ENCODE measurements at regions of chr1 and their contacts with region 1.

Region 1: DNA sequence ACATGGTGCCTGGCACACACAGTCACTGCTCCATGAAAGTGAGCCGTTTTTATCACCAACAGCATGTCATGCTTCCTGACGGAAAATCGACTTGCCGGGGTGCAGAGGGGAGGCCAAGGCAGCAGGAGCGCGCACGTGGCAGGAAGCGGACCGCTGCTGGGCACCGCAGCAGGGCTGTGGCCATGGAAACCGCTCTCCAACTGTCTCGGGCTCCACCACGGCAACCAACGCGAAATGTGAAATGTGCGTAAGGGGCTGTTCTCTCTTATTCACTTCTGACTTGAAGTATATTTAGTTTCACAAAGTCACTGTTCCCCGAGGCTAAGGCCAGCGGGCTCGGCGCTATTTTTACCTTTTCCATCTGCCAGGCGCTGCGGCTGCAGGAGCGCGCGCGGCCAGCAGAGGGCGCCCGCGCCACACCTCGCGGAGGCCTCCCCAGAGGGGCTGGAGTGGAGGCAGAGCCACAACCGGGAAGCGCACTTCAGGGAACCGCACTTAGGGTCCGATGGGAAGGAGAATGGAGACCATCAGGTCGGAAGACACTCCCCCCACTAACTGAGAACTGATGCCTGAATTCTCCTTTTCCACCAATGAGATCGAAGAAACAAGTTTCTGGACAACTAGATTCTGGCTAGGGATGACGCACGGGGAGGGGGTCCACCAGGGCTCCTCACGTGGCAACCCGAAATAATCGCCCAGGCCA is 19.7 kb downstream of the RCC2 start:
- DNase-seq: peak; percentile 37 to 80 (median 64)
- ATAC-seq: peak; percentile 93
- H3K4me3 ChIP-seq: no peak overlapping the region
- H3K4me3 Mint-ChIP-seq: no peak overlapping the region
- H3K27ac ChIP-seq: no peak overlapping the region
- H3K27ac Mint-ChIP-seq: peak overlapping the region in 4 of 9 donors; percentile 42 to 76 (median 59)
- H3K4me1 ChIP-seq: no peaks in the 10 kb centered on the region
- H3K4me1 Mint-ChIP-seq: peaks cover 0 to 11% (median 6%) of the 10 kb centered on the region in 7 donors
- H3K27me3 ChIP-seq: no peaks in the 10 kb centered on the region
- H3K27me3 Mint-ChIP-seq: no peaks in the 10 kb centered on the region

Region 2: GRCh38 chr1:17045634-17046333 is 374.0 kb before region 1 on chr1:
- CTCF ChIA-PET with region 1: no interaction called
- POLR2A ChIA-PET with region 1: no interaction called
- intact Hi-C with region 1: no loop called
- DNase-seq: peak in 6 of 9 donors; percentile 21 to 47 (median 28)
- ATAC-seq: peak; percentile 50
- H3K4me3 ChIP-seq: no peak overlapping the region
- H3K4me3 Mint-ChIP-seq: peak overlapping the region in 2 of 10 donors; percentile 4 to 49
- H3K27ac ChIP-seq: no peak overlapping the region
- H3K27ac Mint-ChIP-seq: peak overlapping the region in 6 of 9 donors; percentile 45 to 79 (median 66)
- H3K4me1 ChIP-seq: peaks cover 0 to 3% of the 10 kb centered on the region in 2 donors
- H3K4me1 Mint-ChIP-seq: peaks cover 5 to 28% (median 20%) of the 10 kb centered on the region in 7 donors
- H3K27me3 ChIP-seq: no peaks in the 10 kb centered on the region
- H3K27me3 Mint-ChIP-seq: no peaks in the 10 kb centered on the region

Region 3: GRCh38 chr1:17098446-17099251 is 321.1 kb before region 1 on chr1:
- CTCF ChIA-PET with region 1: no interaction called
- POLR2A ChIA-PET with region 1: no interaction called
- intact Hi-C with region 1: no loop called
- DNase-seq: no peak
- ATAC-seq: peak; percentile 64
- H3K4me3 ChIP-seq: no peak overlapping the region
- H3K4me3 Mint-ChIP-seq: no peak overlapping the region
- H3K27ac ChIP-seq: no peak overlapping the region
- H3K27ac Mint-ChIP-seq: no peak overlapping the region
- H3K4me1 ChIP-seq: no peaks in the 10 kb centered on the region
- H3K4me1 Mint-ChIP-seq: peaks cover 0 to 3% (median 0%) of the 10 kb centered on the region in 7 donors
- H3K27me3 ChIP-seq: no peaks in the 10 kb centered on the region
- H3K27me3 Mint-ChIP-seq: peaks cover 0 to 3% (median 0%) of the 10 kb centered on the region in 5 donors

Region 4: DNA sequence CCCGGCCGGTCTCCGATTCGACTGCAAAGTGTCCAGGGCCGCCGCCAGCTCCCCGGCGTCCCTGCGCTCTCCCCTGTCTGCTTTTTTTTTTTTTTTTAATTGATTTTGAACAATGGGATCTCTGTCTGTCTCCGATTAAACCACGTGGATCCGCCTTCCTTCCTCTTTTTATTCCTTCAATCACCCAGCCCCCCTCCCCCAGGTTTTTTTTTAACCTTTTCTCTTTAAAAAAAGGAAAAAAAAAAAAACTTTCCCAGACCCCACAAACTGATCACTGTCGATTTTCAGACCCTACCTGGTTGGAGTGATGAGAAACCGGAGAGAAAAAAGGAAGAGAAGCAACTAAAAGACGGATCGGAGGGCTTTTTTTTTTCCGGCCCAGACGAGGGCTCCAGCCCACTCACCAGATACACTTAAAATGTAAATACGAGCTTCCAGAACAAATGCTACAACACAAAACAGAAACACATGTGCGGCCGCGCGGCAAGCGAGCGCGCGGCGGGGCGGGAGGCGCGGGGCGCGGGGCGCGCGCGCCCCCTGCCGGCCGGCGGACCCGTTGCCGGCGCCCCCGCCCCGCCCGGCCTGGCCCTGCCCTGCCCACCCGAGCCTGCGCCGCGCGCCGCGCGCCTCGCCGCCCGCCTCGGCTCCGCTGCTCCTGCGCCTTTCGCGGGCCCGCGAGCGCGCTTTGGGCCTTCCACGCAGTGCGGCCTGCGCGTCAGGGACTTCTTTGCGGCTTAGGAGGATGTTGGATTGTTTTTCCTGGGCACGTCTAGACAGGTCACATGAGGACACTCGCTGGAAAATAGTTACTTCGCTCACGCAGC is 19.7 kb after region 1 on chr1 and contains the start of gene RCC2:
- CTCF ChIA-PET with region 1: interaction called, 3 read pairs
- POLR2A ChIA-PET with region 1: interaction called, 6 read pairs
- intact Hi-C with region 1: loop called (anchors 1 to 2 kb)
- DNase-seq: peak; percentile 63 to 80 (median 74)
- ATAC-seq: peak; percentile 91
- H3K4me3 ChIP-seq: peak within 1 kb of the TSS; percentile 94
- H3K4me3 Mint-ChIP-seq: peak within 1 kb of the TSS; percentile 92 to 99 (median 96)
- H3K27ac ChIP-seq: peak within 1 kb of the TSS; percentile 86
- H3K27ac Mint-ChIP-seq: peak within 1 kb of the TSS; percentile 87 to 98 (median 96)
- H3K4me1 ChIP-seq: peaks cover 14 to 19% of the 10 kb centered on the region in 2 donors
- H3K4me1 Mint-ChIP-seq: peaks cover 17 to 54% (median 43%) of the 10 kb centered on the region in 7 donors
- H3K27me3 ChIP-seq: no peaks in the 10 kb centered on the region
- H3K27me3 Mint-ChIP-seq: no peaks in the 10 kb centered on the region
- total RNA-seq, gene RCC2: 42.1 to 130 (median 46.0) TPM

Region 5: GRCh38 chr1:17475729-17476128 is 56.0 kb after region 1 on chr1:
- CTCF ChIA-PET with region 1: interaction called, 3 read pairs
- POLR2A ChIA-PET with region 1: no interaction called
- intact Hi-C with region 1: loop called (anchors 2 to 10 kb)
- DNase-seq: no peak
- ATAC-seq: no peak
- H3K4me3 ChIP-seq: no peak overlapping the region
- H3K4me3 Mint-ChIP-seq: no peak overlapping the region
- H3K27ac ChIP-seq: no peak overlapping the region
- H3K27ac Mint-ChIP-seq: no peak overlapping the region
- H3K4me1 ChIP-seq: no peaks in the 10 kb centered on the region
- H3K4me1 Mint-ChIP-seq: no peaks in the 10 kb centered on the region
- H3K27me3 ChIP-seq: no peaks in the 10 kb centered on the region
- H3K27me3 Mint-ChIP-seq: peaks cover 0 to 3% (median 0%) of the 10 kb centered on the region in 5 donors

Region 6: GRCh38 chr1:17485280-17485679 is 65.5 kb after region 1 on chr1:
- CTCF ChIA-PET with region 1: no interaction called
- POLR2A ChIA-PET with region 1: no interaction called
- intact Hi-C with region 1: loop called in 1 of 2 experiments (anchors 2 kb)
- DNase-seq: no peak
- ATAC-seq: no peak
- H3K4me3 ChIP-seq: no peak overlapping the region
- H3K4me3 Mint-ChIP-seq: no peak overlapping the region
- H3K27ac ChIP-seq: no peak overlapping the region
- H3K27ac Mint-ChIP-seq: no peak overlapping the region
- H3K4me1 ChIP-seq: no peaks in the 10 kb centered on the region
- H3K4me1 Mint-ChIP-seq: peaks cover 0 to 5% (median 0%) of the 10 kb centered on the region in 7 donors
- H3K27me3 ChIP-seq: no peaks in the 10 kb centered on the region
- H3K27me3 Mint-ChIP-seq: peaks cover 0 to 26% (median 7%) of the 10 kb centered on the region in 5 donors

Region 7: GRCh38 chr1:17606826-17607440 is 187.2 kb after region 1 on chr1:
- CTCF ChIA-PET with region 1: no interaction called
- POLR2A ChIA-PET with region 1: no interaction called
- intact Hi-C with region 1: loop called (anchors 2 to 5 kb)
- DNase-seq: peak in 3 of 9 donors; percentile 2 to 54 (median 12)
- ATAC-seq: no peak
- H3K4me3 ChIP-seq: no peak overlapping the region
- H3K4me3 Mint-ChIP-seq: no peak overlapping the region
- H3K27ac ChIP-seq: no peak overlapping the region
- H3K27ac Mint-ChIP-seq: no peak overlapping the region
- H3K4me1 ChIP-seq: no peaks in the 10 kb centered on the region
- H3K4me1 Mint-ChIP-seq: peaks cover 0 to 6% (median 0%) of the 10 kb centered on the region in 7 donors
- H3K27me3 ChIP-seq: no peaks in the 10 kb centered on the region
- H3K27me3 Mint-ChIP-seq: peaks cover 0 to 7% (median 0%) of the 10 kb centered on the region in 5 donors

Region 8: DNA sequence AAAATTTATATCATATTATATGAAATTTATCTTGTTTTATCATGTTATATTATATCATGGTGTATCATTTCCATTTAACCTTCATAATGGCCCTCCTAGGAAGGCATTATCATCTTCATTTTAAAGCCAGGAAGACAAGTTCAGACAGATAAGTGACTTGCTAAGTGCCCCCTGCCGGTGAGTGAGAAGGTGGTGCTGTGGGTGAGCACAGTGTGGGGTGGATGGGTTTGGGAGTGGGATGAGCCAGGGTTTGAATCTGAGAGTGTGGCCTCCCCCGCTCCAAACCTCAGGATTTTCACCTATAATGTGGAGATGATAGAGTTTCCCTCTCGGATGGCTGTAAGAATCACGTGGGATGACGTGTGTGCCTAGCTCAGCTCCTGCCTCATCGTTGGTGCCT is 579.1 kb after region 1 on chr1:
- CTCF ChIA-PET with region 1: no interaction called
- POLR2A ChIA-PET with region 1: no interaction called
- intact Hi-C with region 1: no loop called
- DNase-seq: no peak
- ATAC-seq: no peak
- H3K4me3 ChIP-seq: no peak overlapping the region
- H3K4me3 Mint-ChIP-seq: no peak overlapping the region
- H3K27ac ChIP-seq: no peak overlapping the region
- H3K27ac Mint-ChIP-seq: no peak overlapping the region
- H3K4me1 ChIP-seq: no peaks in the 10 kb centered on the region
- H3K4me1 Mint-ChIP-seq: peaks cover 0 to 1% (median 0%) of the 10 kb centered on the region in 7 donors
- H3K27me3 ChIP-seq: no peaks in the 10 kb centered on the region
- H3K27me3 Mint-ChIP-seq: peaks cover 0 to 24% (median 14%) of the 10 kb centered on the region in 5 donors

Measured in naive thymus-derived CD4-positive, alpha-beta T cell (primary cell).